ENCODE measurements at regions of chr17 and their contacts with region 1.

Region 1: GRCh38 chr17:28763804-28764266 is 20.0 kb downstream of the TRAF4 start:
- DNase-seq: peak in 1 of 2 donors; percentile 91
- H3K4me3 ChIP-seq: no peak overlapping the region
- H3K27ac ChIP-seq: no peak overlapping the region
- H3K4me1 ChIP-seq: no peaks in the 10 kb centered on the region
- H3K27me3 ChIP-seq: no peaks in the 10 kb centered on the region
- CTCF ChIP-seq: peak; percentile 70 to 88 (median 84)

Region 2: DNA sequence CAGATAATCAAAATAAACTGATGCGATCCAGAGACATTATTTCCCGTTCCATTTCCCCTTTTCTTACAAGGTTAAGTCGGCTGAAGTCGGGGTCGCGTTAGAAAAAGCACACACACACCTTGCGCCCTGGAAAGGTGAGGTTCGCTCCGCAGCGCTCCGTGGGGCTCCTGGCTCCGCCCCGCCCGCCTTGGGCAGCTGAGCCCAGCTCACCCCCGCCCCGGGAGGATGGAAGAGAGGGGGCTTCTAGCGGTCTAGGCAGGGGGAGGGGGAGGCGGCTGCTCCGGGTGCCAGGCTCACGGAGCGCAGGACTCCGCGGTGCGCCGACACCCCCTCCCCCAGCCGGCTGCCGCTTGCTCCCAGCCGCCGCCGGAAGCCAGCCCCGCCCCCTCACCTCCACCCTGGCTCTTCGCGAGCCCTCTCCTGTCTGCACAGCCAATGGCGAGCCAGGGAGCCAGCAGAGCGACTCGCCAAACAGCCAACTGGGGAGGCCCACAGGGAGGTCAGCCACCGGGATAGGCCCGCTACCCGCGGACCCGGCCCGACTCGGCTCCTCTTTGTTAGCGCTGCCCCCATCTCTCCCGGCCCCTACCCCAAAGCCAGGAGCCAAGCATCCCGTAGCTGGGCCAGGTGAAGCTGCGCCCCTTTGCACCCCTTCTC is 48.4 kb after region 1 on chr17:
- intact Hi-C with region 1: loop called (anchors 5 kb)
- DNase-seq: peak; percentile 93 to 98
- H3K4me3 ChIP-seq: peak overlapping the region; percentile 74 to 90
- H3K27ac ChIP-seq: peak overlapping the region; percentile 90
- H3K4me1 ChIP-seq: peaks cover 0 to 43% of the 10 kb centered on the region in 2 donors
- H3K27me3 ChIP-seq: no peaks in the 10 kb centered on the region
- CTCF ChIP-seq: no peak

Region 3: DNA sequence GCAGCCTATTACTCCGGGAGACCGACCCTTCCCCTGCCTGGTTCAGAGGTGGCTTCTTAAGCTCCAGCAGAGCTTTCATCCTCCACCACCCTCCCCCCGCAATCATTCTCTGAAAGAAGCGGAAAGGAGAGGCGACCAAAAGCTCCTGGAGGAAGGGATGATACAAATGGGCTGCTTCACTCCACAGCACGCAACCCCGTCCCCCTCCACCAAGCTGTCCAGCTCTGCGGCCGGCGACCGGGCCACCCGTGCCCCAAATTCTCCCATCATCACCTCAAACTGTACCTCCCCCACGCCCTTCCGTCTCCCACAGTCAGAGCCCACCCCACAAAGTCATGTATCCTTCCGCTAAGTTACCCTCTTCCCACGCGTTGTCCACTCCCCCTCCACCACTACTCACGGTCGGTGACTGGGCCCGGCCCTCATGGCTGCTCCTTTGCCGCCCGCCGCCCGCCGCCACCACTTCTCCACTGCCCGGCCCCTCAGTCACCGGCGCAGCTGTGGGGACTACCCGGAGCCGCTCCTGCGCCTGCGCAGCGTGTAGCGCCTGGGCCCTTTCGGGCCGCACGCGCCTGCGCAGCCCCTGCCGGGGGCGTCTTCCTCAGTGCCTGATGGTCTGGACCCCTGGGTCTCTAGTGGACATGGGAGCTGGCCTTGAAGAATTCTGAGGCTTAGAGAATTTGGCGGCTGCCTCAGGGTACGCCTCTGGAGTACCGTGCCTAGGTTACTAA is 78.6 kb after region 1 on chr17 and contains the start of gene FAM222B:
- intact Hi-C with region 1: loop called (anchors 1 kb)
- DNase-seq: peak; percentile 39 to 89
- H3K4me3 ChIP-seq: peak within 1 kb of the TSS; percentile 69 to 70
- H3K27ac ChIP-seq: peak within 1 kb of the TSS; percentile 71 to 76
- H3K4me1 ChIP-seq: peaks cover 0 to 9% of the 10 kb centered on the region in 2 donors
- H3K27me3 ChIP-seq: no peaks in the 10 kb centered on the region
- CTCF ChIP-seq: peak in 1 of 3 experiments; percentile 7
- total RNA-seq, gene FAM222B: 30.7 TPM

Region 4: DNA sequence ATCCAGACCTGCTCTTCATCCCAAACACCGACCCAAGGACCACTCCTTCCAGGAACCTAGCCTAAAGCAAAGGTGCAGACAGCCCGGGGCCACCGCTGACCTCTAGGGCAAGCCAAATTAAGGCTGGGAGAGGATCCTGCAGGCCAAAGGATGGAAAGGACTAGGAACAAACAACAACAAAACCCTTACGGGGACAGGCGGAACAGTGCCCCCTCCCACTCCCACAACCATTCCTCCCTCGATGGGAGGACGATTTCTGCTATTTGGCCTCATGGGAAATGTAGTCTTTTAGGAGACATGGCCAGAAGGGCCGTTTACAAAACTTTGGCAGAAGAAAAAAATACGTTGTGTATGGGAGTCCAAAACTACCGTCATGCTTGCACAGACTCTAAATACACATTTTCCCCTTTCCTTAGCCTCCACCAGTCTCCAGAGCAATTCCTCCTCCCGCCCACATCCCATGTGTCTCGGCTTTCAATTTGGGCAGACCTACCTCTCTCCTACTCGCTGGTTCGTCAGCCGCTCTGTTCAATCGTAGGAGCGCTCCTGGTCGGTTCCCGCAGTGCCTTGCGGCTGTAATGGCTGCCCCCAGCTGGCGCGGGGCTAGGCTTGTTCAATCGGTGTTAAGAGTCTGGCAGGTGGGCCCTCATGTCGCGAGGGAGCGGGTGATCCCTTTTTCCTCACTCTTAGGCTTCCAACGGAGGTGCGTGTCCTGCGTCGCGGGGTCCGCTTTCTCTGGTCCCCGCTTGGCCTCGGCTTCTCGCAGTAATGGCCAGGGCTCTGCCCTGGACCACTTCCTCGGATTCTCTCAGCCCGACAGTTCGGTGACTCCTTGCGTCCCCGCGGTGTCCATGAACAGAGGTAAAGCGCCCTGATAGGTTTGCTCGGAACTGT is 90.9 kb after region 1 on chr17 and contains the start of gene ERAL1:
- intact Hi-C with region 1: loop called (anchors 1 kb)
- DNase-seq: peak; percentile 41 to 89
- H3K4me3 ChIP-seq: peak within 1 kb of the TSS; percentile 77 to 85
- H3K27ac ChIP-seq: peak within 1 kb of the TSS; percentile 78 to 79
- H3K4me1 ChIP-seq: peaks cover 6% of the 10 kb centered on the region in 2 donors
- H3K27me3 ChIP-seq: no peaks in the 10 kb centered on the region
- CTCF ChIP-seq: peak in 1 of 3 experiments; percentile 8
- total RNA-seq, gene ERAL1: 5.7 TPM

Region 5: DNA sequence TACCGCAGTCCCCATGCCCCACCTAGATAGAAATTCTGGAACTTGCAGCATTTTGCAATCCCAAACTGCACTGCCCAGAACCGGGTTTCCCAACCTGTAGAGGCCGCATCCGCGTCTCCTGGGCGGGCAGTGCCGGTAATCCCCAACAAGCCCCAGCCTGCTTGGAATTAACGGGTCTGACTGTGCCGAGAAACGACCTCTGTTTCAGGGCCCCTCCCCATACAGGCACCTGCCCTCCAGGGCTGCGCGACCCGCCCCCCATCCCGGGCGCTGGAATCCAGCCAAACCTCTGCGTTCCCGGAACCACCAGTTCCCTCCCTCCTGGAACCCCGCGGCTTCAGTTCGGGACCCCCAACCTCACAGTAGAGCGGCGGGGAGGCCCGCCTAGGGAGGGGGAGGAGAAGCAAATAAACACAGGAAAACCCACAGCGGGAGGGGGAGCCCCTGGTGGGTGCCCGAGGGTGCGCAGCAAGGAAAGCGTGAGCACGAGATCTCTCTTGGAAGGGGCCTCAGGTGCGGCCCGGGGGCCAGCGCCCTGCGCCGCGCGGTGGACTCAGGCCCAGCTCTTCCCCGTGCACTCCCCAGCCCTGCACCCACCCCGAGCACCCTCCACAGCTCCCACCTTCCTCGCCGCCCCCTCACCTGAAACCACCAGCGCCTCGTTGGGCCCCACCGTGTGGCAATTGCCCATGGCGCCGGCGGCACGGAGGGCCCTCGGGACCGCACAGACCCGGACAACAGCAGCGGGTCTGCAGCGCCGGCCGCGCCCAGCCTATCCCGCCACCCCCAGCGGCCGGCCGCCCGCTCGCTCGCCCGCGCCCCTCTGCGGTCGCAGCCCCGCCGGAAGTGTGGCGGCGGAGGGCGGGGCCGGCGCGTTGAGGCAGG is 133.3 kb after region 1 on chr17 and contains the start of gene FLOT2:
- intact Hi-C with region 1: loop called (anchors 5 kb)
- DNase-seq: peak in 1 of 2 donors; percentile 87
- H3K4me3 ChIP-seq: peak within 1 kb of the TSS; percentile 63 to 87
- H3K27ac ChIP-seq: peak within 1 kb of the TSS; percentile 93 to 95
- H3K4me1 ChIP-seq: peaks cover 3 to 42% of the 10 kb centered on the region in 2 donors
- H3K27me3 ChIP-seq: no peaks in the 10 kb centered on the region
- CTCF ChIP-seq: peak; percentile 5 to 20 (median 16)
- total RNA-seq, gene FLOT2: 72.4 TPM

Region 6: DNA sequence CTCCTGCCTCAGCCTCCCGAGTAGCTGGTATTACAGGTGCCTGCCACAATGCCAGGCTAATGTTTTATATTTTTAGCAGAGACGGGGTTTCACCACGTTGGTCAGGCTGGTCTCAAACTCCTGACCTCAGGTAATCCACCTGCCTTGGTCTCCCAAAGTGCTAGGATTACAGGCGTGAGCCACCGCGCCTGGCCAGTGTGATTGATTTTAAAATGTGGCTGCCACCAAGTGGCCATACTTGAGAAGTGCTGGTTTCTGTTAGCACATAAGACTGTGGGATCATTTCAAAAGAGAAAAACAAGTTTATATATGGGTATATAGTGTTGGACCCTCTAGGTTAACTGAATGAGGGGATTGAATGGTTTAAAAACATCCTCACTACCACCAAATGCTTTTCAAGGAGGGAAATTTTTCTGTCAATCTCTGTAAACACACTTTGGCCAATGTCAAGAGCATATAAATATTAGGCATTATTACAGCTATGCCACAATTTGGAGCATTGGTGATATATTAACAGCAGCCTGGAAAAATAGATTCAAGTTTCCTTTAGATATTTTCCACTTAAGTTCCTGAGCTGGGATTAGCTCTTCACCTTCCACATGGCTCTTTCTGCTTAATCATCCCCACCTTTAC is 152.6 kb after region 1 on chr17:
- intact Hi-C with region 1: loop called (anchors 2 kb)
- DNase-seq: no peak
- H3K4me3 ChIP-seq: no peak overlapping the region
- H3K27ac ChIP-seq: no peak overlapping the region
- H3K4me1 ChIP-seq: no peaks in the 10 kb centered on the region
- H3K27me3 ChIP-seq: no peaks in the 10 kb centered on the region
- CTCF ChIP-seq: peak; percentile 52 to 64 (median 62)